ENCODE measurements at regions of chr20 and their contacts with region 1.

Region 1: DNA sequence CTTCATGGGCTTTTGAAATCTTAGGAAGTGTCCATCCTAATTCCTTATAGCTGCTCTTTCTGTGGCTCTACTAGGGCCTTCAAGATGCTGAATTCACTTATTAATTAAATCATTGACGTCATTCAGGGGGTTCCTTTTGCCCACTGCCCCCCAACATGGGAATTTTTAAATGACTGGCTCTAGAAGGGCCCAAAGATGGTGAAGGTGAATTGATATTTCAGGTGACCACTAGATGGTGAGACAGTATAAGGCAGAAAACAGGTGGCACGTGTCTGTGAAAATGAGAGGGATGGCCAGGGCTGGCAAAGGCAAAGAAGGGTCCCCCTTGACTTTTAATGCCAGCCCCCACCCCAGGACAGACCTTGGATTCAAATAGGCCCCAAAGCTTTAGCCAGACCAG is 11.8 kb downstream of the GNAS start:
- DNase-seq: no peak
- H3K4me3 Mint-ChIP-seq: no peak overlapping the region
- H3K27ac Mint-ChIP-seq: no peak overlapping the region
- H3K4me1 Mint-ChIP-seq: no peaks in the 10 kb centered on the region
- H3K27me3 Mint-ChIP-seq: peaks cover 58% of the 10 kb centered on the region

Region 2: GRCh38 chr20:58818585-58819285 is 45.6 kb before region 1 on chr20:
- intact Hi-C with region 1: no loop called
- DNase-seq: peak; percentile 85
- H3K4me3 Mint-ChIP-seq: peak overlapping the region; percentile 25
- H3K27ac Mint-ChIP-seq: peak overlapping the region; percentile 62
- H3K4me1 Mint-ChIP-seq: peaks cover 15% of the 10 kb centered on the region
- H3K27me3 Mint-ChIP-seq: peaks cover 50% of the 10 kb centered on the region

Region 3: GRCh38 chr20:58839474-58839874 is 24.9 kb before region 1 on chr20:
- intact Hi-C with region 1: no loop called
- DNase-seq: peak; percentile 82
- H3K4me3 Mint-ChIP-seq: peak overlapping the region; percentile 62
- H3K27ac Mint-ChIP-seq: no peak overlapping the region
- H3K4me1 Mint-ChIP-seq: peaks cover 4% of the 10 kb centered on the region
- H3K27me3 Mint-ChIP-seq: peaks cover 67% of the 10 kb centered on the region

Region 4: DNA sequence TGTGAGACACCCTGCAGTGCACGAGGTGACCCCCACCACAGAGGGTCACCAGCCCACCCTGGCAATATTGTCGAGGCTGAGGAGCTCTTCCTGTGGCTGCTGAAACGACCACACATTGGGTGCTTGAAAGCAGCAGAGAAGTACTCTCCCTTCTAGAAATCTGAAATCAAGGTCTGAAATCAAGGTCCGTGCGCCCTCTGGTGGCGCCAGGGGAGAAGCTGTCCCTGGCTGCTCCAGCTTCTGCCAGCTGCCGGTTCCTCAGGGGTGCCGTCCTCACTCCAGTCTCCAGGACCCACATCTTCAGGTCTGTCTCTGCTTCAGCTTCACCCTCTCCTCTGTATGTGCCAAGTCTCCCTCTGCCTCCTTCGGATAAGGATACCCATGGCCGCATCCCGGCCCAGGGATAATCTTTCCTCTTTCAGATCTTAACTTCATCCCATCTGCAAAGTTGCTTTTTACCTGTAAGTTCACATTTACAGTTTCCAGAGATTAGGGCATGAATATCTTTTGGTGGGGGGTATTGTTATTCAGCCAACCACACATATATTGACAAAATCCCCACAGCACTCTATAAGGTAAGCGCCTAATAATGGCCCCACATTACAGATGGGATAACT is 631.7 kb after region 1 on chr20:
- intact Hi-C with region 1: loop called (anchors 5 kb)
- DNase-seq: peak; percentile 89
- H3K4me3 Mint-ChIP-seq: no peak overlapping the region
- H3K27ac Mint-ChIP-seq: no peak overlapping the region
- H3K4me1 Mint-ChIP-seq: no peaks in the 10 kb centered on the region
- H3K27me3 Mint-ChIP-seq: peaks cover 12% of the 10 kb centered on the region